ENCODE measurements at regions of chr14 and their contacts with region 1.

Region 1: DNA sequence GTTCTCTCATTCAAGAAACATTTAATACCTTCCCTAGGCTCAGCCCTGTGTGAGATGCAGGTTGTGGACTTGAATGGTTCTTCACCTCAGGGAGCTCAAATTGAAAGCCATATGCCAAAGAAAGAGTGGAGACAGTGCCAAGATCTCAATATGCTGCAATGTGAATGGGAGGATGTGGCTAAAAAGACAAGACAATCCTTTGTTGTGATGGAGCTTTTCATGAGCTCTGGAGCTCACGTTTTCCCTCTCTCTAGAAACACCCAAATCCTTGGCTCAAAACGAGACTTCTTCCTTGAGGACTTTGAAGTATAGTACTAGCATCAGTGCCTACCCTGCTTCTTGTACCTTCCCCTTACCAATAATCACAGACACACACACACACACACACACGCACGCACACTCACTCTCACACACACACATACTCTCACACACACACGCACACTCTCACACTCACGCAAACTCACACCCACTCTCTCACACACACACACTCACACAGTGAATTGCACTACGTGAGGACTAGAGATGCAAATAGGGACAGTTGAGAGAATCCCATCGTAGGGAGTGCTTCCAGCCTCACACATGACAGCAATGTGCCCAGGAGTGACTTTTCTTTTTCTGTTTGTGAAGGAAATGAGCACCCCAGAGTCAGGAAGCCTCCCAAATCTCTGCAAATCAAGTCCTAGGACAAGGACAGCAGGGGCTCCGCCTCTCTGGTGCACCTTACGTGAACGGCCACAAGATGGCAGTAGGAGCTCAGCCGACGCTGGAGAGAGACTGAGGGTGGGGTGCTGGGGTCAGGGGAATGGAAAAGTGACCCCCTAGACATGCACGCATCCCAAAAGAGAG is 231.4 kb downstream of the PCNX1 start:
- DNase-seq: peak; percentile 54 to 69
- H3K4me3 ChIP-seq: no peak overlapping the region
- H3K4me3 Mint-ChIP-seq: no peak overlapping the region
- H3K27ac Mint-ChIP-seq: no peak overlapping the region
- H3K4me1 ChIP-seq: peaks cover 30% of the 10 kb centered on the region
- H3K4me1 Mint-ChIP-seq: peaks cover 5% of the 10 kb centered on the region
- H3K27me3 ChIP-seq: no peaks in the 10 kb centered on the region
- H3K27me3 Mint-ChIP-seq: no peaks in the 10 kb centered on the region
- CTCF ChIP-seq: peak; percentile 89 to 95

Region 2: GRCh38 chr14:71103662-71104484 is 34.8 kb before region 1 on chr14:
- CTCF ChIA-PET with region 1: interaction called, 3 read pairs
- POLR2A ChIA-PET with region 1: no interaction called
- intact Hi-C with region 1: loop called (anchors 1 kb)
- DNase-seq: peak in 1 of 2 experiments; percentile 61
- H3K4me3 ChIP-seq: no peak overlapping the region
- H3K4me3 Mint-ChIP-seq: no peak overlapping the region
- H3K27ac Mint-ChIP-seq: no peak overlapping the region
- H3K4me1 ChIP-seq: peaks cover 17% of the 10 kb centered on the region; the same call in 1 of the 2 replicates
- H3K4me1 Mint-ChIP-seq: peaks cover 13% of the 10 kb centered on the region
- H3K27me3 ChIP-seq: no peaks in the 10 kb centered on the region
- H3K27me3 Mint-ChIP-seq: no peaks in the 10 kb centered on the region
- CTCF ChIP-seq: peak; percentile 81 to 82

Region 3: GRCh38 chr14:71166180-71166790 is 27.6 kb after region 1 on chr14:
- CTCF ChIA-PET with region 1: no interaction called
- POLR2A ChIA-PET with region 1: interaction called, 4 read pairs
- intact Hi-C with region 1: loop called (anchors 2 kb)
- DNase-seq: peak; percentile 67 to 69
- H3K4me3 ChIP-seq: no peak overlapping the region
- H3K4me3 Mint-ChIP-seq: peak overlapping the region; percentile 60
- H3K27ac Mint-ChIP-seq: peak overlapping the region; percentile 72
- H3K4me1 ChIP-seq: peaks cover 38% of the 10 kb centered on the region
- H3K4me1 Mint-ChIP-seq: peaks cover 35% of the 10 kb centered on the region
- H3K27me3 ChIP-seq: no peaks in the 10 kb centered on the region
- H3K27me3 Mint-ChIP-seq: no peaks in the 10 kb centered on the region
- CTCF ChIP-seq: peak; percentile 36 to 64

Region 4: GRCh38 chr14:71187647-71188356 is 49.1 kb after region 1 on chr14:
- CTCF ChIA-PET with region 1: no interaction called
- POLR2A ChIA-PET with region 1: no interaction called
- intact Hi-C with region 1: loop called (anchors 2 kb)
- DNase-seq: peak; percentile 72 to 82
- H3K4me3 ChIP-seq: no peak overlapping the region
- H3K4me3 Mint-ChIP-seq: peak overlapping the region; percentile 48
- H3K27ac Mint-ChIP-seq: peak overlapping the region; percentile 95
- H3K4me1 ChIP-seq: peaks cover 31% of the 10 kb centered on the region
- H3K4me1 Mint-ChIP-seq: peaks cover 22% of the 10 kb centered on the region
- H3K27me3 ChIP-seq: no peaks in the 10 kb centered on the region
- H3K27me3 Mint-ChIP-seq: no peaks in the 10 kb centered on the region
- CTCF ChIP-seq: no peak

Region 5: DNA sequence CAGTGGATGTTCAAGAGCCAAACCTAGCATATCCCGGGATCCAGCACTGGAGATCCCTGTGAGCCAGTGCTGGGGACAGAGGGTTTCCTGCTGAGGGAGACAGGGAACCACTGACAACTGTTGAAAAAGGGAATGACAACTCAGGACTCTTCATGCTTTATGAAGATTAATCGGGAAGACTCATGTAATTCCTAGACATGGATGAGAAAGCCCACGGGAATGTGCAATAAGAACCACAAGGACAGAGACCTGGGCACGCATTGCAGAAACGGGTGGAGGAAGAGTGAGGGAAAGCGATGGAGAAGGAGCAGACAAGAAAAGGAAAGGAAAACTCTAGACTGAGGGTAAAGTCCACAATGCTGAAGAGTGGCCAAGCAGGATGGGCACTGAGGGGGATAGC is 64.6 kb after region 1 on chr14:
- CTCF ChIA-PET with region 1: no interaction called
- POLR2A ChIA-PET with region 1: no interaction called
- intact Hi-C with region 1: no loop called
- DNase-seq: no peak
- H3K4me3 ChIP-seq: no peak overlapping the region
- H3K4me3 Mint-ChIP-seq: peak overlapping the region; percentile 9
- H3K27ac Mint-ChIP-seq: peak overlapping the region; percentile 40
- H3K4me1 ChIP-seq: 0 out of 2 replicates have a peak, but pooled peaks cover 4% of the 10 kb centered on the region
- H3K4me1 Mint-ChIP-seq: peaks cover 15% of the 10 kb centered on the region
- H3K27me3 ChIP-seq: no peaks in the 10 kb centered on the region
- H3K27me3 Mint-ChIP-seq: no peaks in the 10 kb centered on the region
- CTCF ChIP-seq: no peak

Region 6: GRCh38 chr14:71403656-71404055 is 265.0 kb after region 1 on chr14:
- CTCF ChIA-PET with region 1: interaction called, 3 read pairs
- POLR2A ChIA-PET with region 1: no interaction called
- intact Hi-C with region 1: loop called (anchors 1 kb)
- DNase-seq: peak; percentile 39 to 47
- H3K4me3 ChIP-seq: no peak overlapping the region
- H3K4me3 Mint-ChIP-seq: no peak overlapping the region
- H3K27ac Mint-ChIP-seq: no peak overlapping the region
- H3K4me1 ChIP-seq: peaks cover 11% of the 10 kb centered on the region; the same call in 1 of the 2 replicates
- H3K4me1 Mint-ChIP-seq: peaks cover 10% of the 10 kb centered on the region
- H3K27me3 ChIP-seq: no peaks in the 10 kb centered on the region
- H3K27me3 Mint-ChIP-seq: no peaks in the 10 kb centered on the region
- CTCF ChIP-seq: peak; percentile 23 to 46

Region 7: GRCh38 chr14:71753126-71753830 is 614.6 kb after region 1 on chr14:
- CTCF ChIA-PET with region 1: interaction called, 3 read pairs
- POLR2A ChIA-PET with region 1: no interaction called
- intact Hi-C with region 1: loop called (anchors 1 kb)
- DNase-seq: peak; percentile 78 to 85
- H3K4me3 ChIP-seq: no peak overlapping the region
- H3K4me3 Mint-ChIP-seq: no peak overlapping the region
- H3K27ac Mint-ChIP-seq: no peak overlapping the region
- H3K4me1 ChIP-seq: peaks cover 6% of the 10 kb centered on the region
- H3K4me1 Mint-ChIP-seq: no peaks in the 10 kb centered on the region
- H3K27me3 ChIP-seq: no peaks in the 10 kb centered on the region
- H3K27me3 Mint-ChIP-seq: no peaks in the 10 kb centered on the region
- CTCF ChIP-seq: peak; percentile 92 to 94

Region 8: GRCh38 chr14:71855399-71856036 is 716.8 kb after region 1 on chr14:
- CTCF ChIA-PET with region 1: no interaction called
- POLR2A ChIA-PET with region 1: no interaction called
- intact Hi-C with region 1: loop called (anchors 10 kb)
- DNase-seq: peak; percentile 58 to 74
- H3K4me3 ChIP-seq: no peak overlapping the region
- H3K4me3 Mint-ChIP-seq: no peak overlapping the region
- H3K27ac Mint-ChIP-seq: no peak overlapping the region
- H3K4me1 ChIP-seq: no peaks in the 10 kb centered on the region
- H3K4me1 Mint-ChIP-seq: no peaks in the 10 kb centered on the region
- H3K27me3 ChIP-seq: no peaks in the 10 kb centered on the region
- H3K27me3 Mint-ChIP-seq: peaks cover 4% of the 10 kb centered on the region
- CTCF ChIP-seq: peak; percentile 56 to 61

Measured in Caco-2 (cell line).